CD4-positive, alpha-beta T cell (primary cell): ENCODE measurements at regions of chr12 and their contacts with region 1.

Region 1: DNA sequence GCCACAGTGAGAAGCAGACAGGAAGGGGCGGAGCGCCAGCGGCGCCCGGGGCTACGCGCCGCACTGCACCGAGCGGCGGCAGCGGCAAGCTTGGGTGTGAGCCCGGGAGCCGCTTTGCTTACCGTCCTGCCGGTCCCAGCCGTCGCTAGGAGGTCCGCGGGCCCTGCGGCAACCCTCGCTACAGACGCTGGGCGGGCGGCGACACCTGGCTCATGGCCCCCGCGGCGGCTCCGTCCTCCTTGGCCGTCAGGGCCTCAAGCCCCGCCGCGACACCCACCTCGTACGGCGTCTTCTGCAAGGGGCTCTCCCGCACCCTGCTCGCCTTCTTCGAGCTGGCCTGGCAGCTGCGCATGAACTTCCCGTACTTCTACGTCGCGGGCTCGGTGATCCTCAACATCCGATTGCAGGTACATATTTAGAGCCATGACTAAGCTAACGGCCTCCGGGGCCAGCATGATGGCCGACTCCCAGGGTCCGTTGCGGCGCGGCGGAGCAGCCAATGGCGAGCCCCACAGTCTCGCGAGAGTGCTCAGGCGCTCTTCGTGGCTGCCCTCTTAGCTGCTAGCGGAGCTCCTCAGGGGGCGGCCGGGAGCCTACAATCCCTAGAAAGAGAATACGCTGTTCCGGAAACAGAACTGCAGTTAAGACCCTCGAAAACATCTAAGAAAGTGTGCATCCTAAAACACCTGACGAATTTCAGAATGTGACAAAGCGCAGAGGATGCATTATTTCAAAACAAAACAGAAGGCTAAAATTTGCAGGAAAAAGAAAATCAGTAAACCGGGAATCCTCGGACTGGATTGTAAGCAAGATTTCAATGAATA is at the start of gene SMIM10L1:
- DNase-seq: peak; percentile 78 to 96 (median 84)
- ATAC-seq: peak; percentile 91
- H3K4me3 ChIP-seq: peak within 1 kb of the TSS; percentile 71
- H3K4me3 Mint-ChIP-seq: peak within 1 kb of the TSS; percentile 99
- H3K27ac ChIP-seq: peak within 1 kb of the TSS; percentile 79 to 82
- H3K27ac Mint-ChIP-seq: peak within 1 kb of the TSS; percentile 96
- H3K4me1 ChIP-seq: peaks cover 17% of the 10 kb centered on the region
- H3K4me1 Mint-ChIP-seq: peaks cover 75% of the 10 kb centered on the region
- H3K27me3 ChIP-seq: no peaks in the 10 kb centered on the region
- H3K27me3 Mint-ChIP-seq: no peaks in the 10 kb centered on the region
- CTCF ChIP-seq: peak; percentile 12
- total RNA-seq, gene SMIM10L1: 9.0 to 9.6 TPM

Region 2: DNA sequence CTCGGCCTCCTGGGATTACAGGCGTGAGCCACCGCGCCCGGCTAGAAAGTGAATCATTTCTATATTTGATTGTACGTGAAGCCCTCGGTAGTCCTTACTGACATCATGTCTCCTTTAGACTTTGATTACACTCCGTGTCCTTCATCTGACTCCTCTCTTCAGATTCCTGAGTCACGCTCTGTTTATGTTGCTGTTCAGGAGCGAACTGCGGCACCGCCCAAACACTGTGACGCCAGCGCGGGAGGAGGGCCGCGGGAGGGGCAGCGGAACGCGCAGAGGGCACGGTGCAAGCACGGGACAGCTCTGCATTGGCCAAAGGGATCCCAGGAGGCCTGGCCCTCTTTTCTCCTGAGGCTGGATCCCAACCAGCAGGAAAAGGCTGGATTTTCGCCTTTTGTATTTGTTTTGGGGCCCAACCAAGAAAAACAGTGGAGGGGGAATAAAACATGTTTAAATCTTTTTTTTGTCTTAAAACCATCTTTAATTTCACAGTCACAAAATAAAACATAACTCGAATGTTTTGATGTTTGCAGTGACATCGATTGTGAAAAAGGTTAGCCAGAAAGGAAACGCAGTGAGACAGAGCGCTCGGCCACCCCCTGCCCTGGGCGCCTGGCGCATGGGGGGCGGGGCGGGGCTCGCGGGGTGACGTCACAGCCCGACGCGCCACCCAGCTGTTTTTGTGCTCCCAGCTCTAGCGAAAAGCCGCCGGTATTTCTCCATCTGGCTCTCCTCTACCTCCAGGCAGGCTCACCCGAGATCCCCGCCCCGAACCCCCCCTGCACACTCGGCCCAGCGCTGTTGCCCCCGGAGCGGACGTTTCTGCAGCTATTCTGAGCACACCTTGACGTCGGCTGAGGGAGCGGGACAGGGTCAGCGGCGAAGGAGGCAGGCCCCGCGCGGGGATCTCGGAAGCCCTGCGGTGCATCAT is 958.9 kb before region 1 on chr12 and contains the start of gene GABARAPL1:
- CTCF ChIA-PET with region 1: no interaction called
- POLR2A ChIA-PET with region 1: interaction called, 3 read pairs
- intact Hi-C with region 1: loop called in 1 of 2 experiments (anchors 5 kb)
- DNase-seq: peak; percentile 69 to 95 (median 86)
- ATAC-seq: peak; percentile 75
- H3K4me3 ChIP-seq: peak within 1 kb of the TSS; percentile 87
- H3K4me3 Mint-ChIP-seq: peak within 1 kb of the TSS; percentile 95
- H3K27ac ChIP-seq: peak within 1 kb of the TSS; percentile 77 to 89
- H3K27ac Mint-ChIP-seq: peak within 1 kb of the TSS; percentile 98
- H3K4me1 ChIP-seq: peaks cover 31% of the 10 kb centered on the region
- H3K4me1 Mint-ChIP-seq: peaks cover 31% of the 10 kb centered on the region
- H3K27me3 ChIP-seq: no peaks in the 10 kb centered on the region
- H3K27me3 Mint-ChIP-seq: peaks cover 6% of the 10 kb centered on the region
- CTCF ChIP-seq: no peak
- total RNA-seq, gene GABARAPL1: 267 to 276 TPM

Region 3: GRCh38 chr12:10613349-10614055 is 557.9 kb before region 1 on chr12 and contains the start of gene MAGOHB:
- CTCF ChIA-PET with region 1: no interaction called
- POLR2A ChIA-PET with region 1: interaction called, 21 read pairs
- intact Hi-C with region 1: loop called in 1 of 2 experiments (anchors 5 kb)
- DNase-seq: peak; percentile 95 to 100 (median 98)
- ATAC-seq: peak; percentile 91
- H3K4me3 ChIP-seq: peak within 1 kb of the TSS; percentile 94
- H3K4me3 Mint-ChIP-seq: peak within 1 kb of the TSS; percentile 99
- H3K27ac ChIP-seq: peak within 1 kb of the TSS; percentile 93 to 95
- H3K27ac Mint-ChIP-seq: peak within 1 kb of the TSS; percentile 99
- H3K4me1 ChIP-seq: peaks cover 11% of the 10 kb centered on the region
- H3K4me1 Mint-ChIP-seq: peaks cover 26% of the 10 kb centered on the region
- H3K27me3 ChIP-seq: no peaks in the 10 kb centered on the region
- H3K27me3 Mint-ChIP-seq: peaks cover 17% of the 10 kb centered on the region
- CTCF ChIP-seq: no peak
- total RNA-seq, gene MAGOHB: 7.5 to 7.7 TPM

Region 4: GRCh38 chr12:10982244-10982643 is 189.1 kb before region 1 on chr12:
- CTCF ChIA-PET with region 1: no interaction called
- POLR2A ChIA-PET with region 1: interaction called, 15 read pairs
- intact Hi-C with region 1: no loop called
- DNase-seq: peak in 11 of 14 experiments; percentile 0 to 91 (median 22)
- ATAC-seq: peak; percentile 92
- H3K4me3 ChIP-seq: no peak overlapping the region
- H3K4me3 Mint-ChIP-seq: peak overlapping the region; percentile 55
- H3K27ac ChIP-seq: no peak overlapping the region
- H3K27ac Mint-ChIP-seq: peak overlapping the region; percentile 57
- H3K4me1 ChIP-seq: peaks cover 18% of the 10 kb centered on the region
- H3K4me1 Mint-ChIP-seq: peaks cover 67% of the 10 kb centered on the region
- H3K27me3 ChIP-seq: no peaks in the 10 kb centered on the region
- H3K27me3 Mint-ChIP-seq: no peaks in the 10 kb centered on the region
- CTCF ChIP-seq: no peak

Region 5: DNA sequence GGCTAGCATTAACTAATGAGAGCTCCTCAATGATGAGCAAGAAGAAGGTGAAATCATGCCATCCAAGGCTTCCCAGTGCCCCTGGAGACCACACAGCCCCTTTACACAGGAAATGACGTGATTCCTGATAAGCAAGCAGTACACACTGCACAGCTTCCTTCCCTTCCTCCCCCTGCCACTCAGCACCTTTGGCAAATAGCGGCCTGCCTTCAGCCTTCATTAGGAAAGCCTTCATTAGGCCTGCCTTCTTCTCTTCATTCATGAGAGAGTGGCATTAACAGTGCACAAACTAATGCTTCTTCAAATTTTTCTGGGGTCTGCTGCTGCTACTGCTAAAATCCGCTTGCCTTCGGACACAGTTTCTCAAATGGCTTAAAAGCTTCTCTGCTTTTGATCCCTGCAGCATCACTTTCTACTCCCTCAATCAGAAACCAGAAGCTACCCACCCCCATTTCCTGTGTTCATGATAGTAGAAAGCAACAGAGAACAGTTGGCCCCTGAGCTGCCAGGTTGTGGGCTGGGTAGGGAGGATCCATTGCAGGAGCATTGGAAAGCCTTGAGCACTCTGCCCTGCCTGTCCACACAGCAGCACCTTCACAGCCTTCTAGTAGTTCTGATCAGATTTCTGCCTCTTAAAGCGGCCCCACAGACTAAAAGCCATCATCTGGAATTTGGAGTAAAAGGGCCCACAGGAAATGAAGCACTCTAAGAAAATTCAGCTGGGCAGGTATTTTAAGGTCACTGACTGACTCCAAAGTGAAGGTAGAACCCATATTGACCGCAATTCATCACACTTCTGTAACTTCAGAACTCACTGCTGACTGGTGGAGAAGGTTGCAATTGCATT is 374.4 kb after region 1 on chr12:
- CTCF ChIA-PET with region 1: no interaction called
- POLR2A ChIA-PET with region 1: interaction called, 43 read pairs
- intact Hi-C with region 1: loop called in 1 of 2 experiments (anchors 10 kb)
- DNase-seq: peak; percentile 21 to 86 (median 40)
- ATAC-seq: peak; percentile 82
- H3K4me3 ChIP-seq: peak overlapping the region; percentile 29
- H3K4me3 Mint-ChIP-seq: peak overlapping the region; percentile 79
- H3K27ac ChIP-seq: peak overlapping the region; percentile 83 to 86
- H3K27ac Mint-ChIP-seq: peak overlapping the region; percentile 93
- H3K4me1 ChIP-seq: peaks cover 58% of the 10 kb centered on the region
- H3K4me1 Mint-ChIP-seq: peaks cover 74% of the 10 kb centered on the region
- H3K27me3 ChIP-seq: no peaks in the 10 kb centered on the region
- H3K27me3 Mint-ChIP-seq: no peaks in the 10 kb centered on the region
- CTCF ChIP-seq: peak; percentile 20